T-cell (primary cell): ENCODE measurements at regions of chr9 and their contacts with region 1.

Region 1: GRCh38 chr9:33867747-33868439 is 50.9 kb downstream of the UBE2R2 start:
- DNase-seq: no peak
- ATAC-seq: no peak
- H3K4me3 ChIP-seq: no peak overlapping the region
- H3K4me3 Mint-ChIP-seq: no peak overlapping the region
- H3K27ac ChIP-seq: no peak overlapping the region
- H3K27ac Mint-ChIP-seq: no peak overlapping the region
- H3K4me1 ChIP-seq: peaks cover 0 to 13% of the 10 kb centered on the region in 2 experiments
- H3K4me1 Mint-ChIP-seq: peaks cover 34 to 44% (median 43%) of the 10 kb centered on the region in 3 donors
- H3K27me3 ChIP-seq: no peaks in the 10 kb centered on the region
- H3K27me3 Mint-ChIP-seq: no peaks in the 10 kb centered on the region

Region 2: DNA sequence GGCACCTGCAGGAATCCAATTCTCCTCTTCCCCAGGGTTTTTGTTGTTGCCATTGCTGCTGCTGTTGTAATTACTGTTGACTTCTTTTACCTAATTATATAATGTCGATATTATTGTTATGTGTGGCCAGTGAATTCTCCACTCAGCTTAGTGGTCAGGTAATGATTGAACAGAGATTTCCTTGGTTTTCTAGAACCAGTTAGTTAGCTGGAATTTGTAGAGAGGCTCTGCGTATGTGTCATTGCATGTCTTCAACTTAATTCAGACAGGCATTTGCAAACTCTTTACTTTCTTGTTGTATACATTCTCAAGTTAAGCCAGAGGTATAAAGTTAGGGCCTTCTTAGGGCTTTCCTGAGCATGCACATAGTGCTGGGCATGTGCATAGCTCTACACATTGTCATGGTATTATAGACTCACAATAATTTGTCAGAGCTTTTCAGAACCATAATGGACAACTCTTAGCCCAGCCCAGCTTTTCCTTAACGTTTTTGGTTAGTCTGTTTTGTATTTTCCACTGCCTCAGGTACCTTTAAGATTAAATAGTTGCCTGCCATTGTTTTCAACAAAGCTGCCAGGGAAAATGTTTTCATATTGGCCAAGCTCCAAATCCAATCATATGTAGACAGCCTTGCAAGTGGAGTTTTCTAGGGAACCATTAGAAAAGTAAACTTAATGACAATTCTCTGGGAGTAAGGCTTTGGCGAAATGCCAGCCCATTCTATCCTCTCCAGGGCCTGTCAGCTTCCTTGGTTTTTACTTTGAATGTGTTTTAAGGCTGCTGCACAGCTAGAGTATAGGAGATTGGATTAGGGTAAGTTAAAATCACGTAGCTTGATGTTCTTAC is 17.2 kb after region 1 on chr9:
- CTCF ChIA-PET with region 1: interaction called, 3 to 12 read pairs
- POLR2A ChIA-PET with region 1: no interaction called
- DNase-seq: no peak
- ATAC-seq: no peak
- H3K4me3 ChIP-seq: no peak overlapping the region
- H3K4me3 Mint-ChIP-seq: no peak overlapping the region
- H3K27ac ChIP-seq: no peak overlapping the region
- H3K27ac Mint-ChIP-seq: peak overlapping the region in 1 of 2 donors; percentile 16
- H3K4me1 ChIP-seq: peaks cover 0 to 13% of the 10 kb centered on the region in 2 experiments
- H3K4me1 Mint-ChIP-seq: peaks cover 37 to 48% (median 46%) of the 10 kb centered on the region in 3 donors
- H3K27me3 ChIP-seq: no peaks in the 10 kb centered on the region
- H3K27me3 Mint-ChIP-seq: no peaks in the 10 kb centered on the region

Region 3: DNA sequence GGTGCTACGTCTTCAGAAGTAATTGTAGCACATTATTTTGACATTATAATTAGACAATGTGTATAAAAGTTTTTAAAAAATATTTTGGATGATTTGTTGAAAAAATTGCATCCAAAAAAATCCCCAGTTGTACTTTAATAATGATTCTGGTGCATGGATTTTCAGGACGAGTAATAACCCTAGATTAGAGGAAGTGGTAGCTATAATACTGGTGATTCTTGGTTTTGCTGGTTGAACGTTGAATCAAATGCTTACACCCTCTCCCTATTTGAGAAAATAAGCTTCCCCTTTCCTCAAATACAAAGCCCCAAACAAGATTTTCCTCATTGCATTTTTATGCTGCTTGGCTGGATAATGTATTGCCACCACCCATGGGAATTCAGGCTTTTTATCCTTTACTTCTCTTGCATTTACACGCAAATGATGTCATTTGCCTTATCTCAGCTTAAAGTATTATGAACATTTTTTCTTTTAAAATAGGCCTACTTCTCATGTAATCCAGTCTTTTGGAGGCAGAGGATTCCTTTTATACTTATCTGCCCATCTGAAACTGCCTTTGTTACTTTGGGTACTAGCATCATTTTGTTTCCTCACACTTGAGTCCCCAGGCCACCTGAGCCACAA is 35.4 kb after region 1 on chr9:
- CTCF ChIA-PET with region 1: no interaction called
- POLR2A ChIA-PET with region 1: no interaction called
- DNase-seq: no peak
- ATAC-seq: no peak
- H3K4me3 ChIP-seq: no peak overlapping the region
- H3K4me3 Mint-ChIP-seq: no peak overlapping the region
- H3K27ac ChIP-seq: no peak overlapping the region
- H3K27ac Mint-ChIP-seq: peak overlapping the region in 1 of 2 donors; percentile 11
- H3K4me1 ChIP-seq: peaks cover 0 to 2% of the 10 kb centered on the region in 2 experiments
- H3K4me1 Mint-ChIP-seq: peaks cover 20 to 25% (median 22%) of the 10 kb centered on the region in 3 donors
- H3K27me3 ChIP-seq: no peaks in the 10 kb centered on the region
- H3K27me3 Mint-ChIP-seq: no peaks in the 10 kb centered on the region